HAP-1 (cell line): ENCODE measurements at regions of chr3 and their contacts with region 1.

Region 1: DNA sequence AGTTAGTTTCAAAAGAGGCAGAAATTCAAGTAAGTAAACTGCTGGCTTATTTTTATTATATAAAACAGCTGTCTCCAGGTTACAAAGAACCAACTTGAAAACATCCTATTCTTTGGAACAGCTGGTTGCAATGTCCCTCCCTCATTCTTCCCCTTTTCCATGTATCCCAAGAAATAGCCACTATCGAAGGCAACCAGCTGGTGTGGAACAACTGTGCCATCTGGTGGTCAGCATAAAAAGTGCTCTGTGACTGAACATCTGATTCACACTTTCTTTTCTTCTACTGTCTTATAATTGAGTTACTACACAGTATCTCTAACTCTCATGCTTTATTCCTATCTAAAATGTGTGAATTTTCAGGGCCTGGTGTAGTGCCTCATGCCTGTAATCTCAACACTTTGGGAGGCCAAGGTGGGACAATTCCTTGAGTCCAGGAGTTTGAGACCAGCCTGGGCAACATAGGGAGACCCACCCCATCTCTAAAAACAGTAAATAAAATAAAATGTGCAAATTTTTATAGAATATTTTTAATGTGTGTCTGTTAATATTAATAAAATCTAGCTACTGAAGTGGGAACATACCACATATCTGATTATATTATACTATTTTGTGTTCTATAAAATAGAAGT is 9.6 kb downstream of the OSBPL11 start:
- DNase-seq: peak; percentile 76 to 77
- H3K4me3 ChIP-seq: no peak overlapping the region
- H3K4me1 ChIP-seq: no peaks in the 10 kb centered on the region; the same call in 1 of the 2 replicates
- H3K27me3 ChIP-seq: no peaks in the 10 kb centered on the region

Region 2: GRCh38 chr3:124761250-124761796 is 824.4 kb before region 1 on chr3:
- in situ Hi-C with region 1: loop called (anchors 10 kb)
- DNase-seq: peak; percentile 65 to 89
- H3K4me3 ChIP-seq: no peak overlapping the region
- H3K4me1 ChIP-seq: peaks cover 7% of the 10 kb centered on the region
- H3K27me3 ChIP-seq: no peaks in the 10 kb centered on the region

Region 3: GRCh38 chr3:124928333-124929202 is 657.1 kb before region 1 on chr3:
- in situ Hi-C with region 1: loop called (anchors 10 kb)
- DNase-seq: peak; percentile 71 to 79
- H3K4me3 ChIP-seq: no peak overlapping the region
- H3K4me1 ChIP-seq: no peaks in the 10 kb centered on the region
- H3K27me3 ChIP-seq: peaks cover 14% of the 10 kb centered on the region

Region 4: GRCh38 chr3:126146525-126147146 is 560.9 kb after region 1 on chr3:
- in situ Hi-C with region 1: no loop called
- DNase-seq: no peak
- H3K4me3 ChIP-seq: no peak overlapping the region
- H3K4me1 ChIP-seq: no peaks in the 10 kb centered on the region
- H3K27me3 ChIP-seq: peaks cover 6% of the 10 kb centered on the region; the same call in 1 of the 2 replicates